ENCODE measurements at regions of chr9 and their contacts with region 1.

Region 1: GRCh38 chr9:33466565-33467495 is 6.9 kb downstream of the NOL6 start:
- DNase-seq: peak; percentile 85
- ATAC-seq: peak; percentile 88
- H3K4me3 Mint-ChIP-seq: no peak overlapping the region
- H3K27ac Mint-ChIP-seq: no peak overlapping the region
- H3K4me1 Mint-ChIP-seq: peaks cover 10% of the 10 kb centered on the region
- H3K27me3 Mint-ChIP-seq: no peaks in the 10 kb centered on the region

Region 2: DNA sequence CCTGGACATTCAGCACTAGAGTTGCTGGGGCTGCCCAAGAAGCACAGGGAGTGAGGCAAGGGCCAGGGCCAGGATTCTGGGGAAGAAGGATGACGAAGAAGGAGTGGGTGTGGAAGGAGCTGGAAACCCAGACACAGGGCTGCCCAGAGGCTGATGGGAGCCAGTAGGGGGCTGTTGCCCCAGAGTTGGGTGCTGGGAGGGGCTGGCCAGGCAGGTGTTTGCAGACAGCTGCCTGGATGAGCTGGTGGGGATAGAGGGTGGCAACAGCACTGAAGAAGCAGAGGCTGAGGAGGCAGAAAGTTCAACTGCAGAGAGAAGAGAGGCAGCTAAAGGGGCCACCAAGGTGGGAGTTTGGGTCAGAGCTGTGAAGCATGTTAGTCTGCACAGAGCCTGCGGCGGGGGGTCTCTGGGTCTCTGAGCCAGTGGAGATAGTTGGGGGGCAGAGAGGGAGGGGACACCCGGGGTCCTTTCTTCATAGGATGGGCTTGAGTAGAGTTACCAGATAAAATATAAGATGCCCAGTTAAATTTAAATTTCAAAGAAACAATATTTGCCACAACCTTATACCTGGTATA is 62.0 kb before region 1 on chr9:
- CTCF ChIA-PET with region 1: interaction called, 32 read pairs
- POLR2A ChIA-PET with region 1: interaction called, 4 read pairs
- intact Hi-C with region 1: loop called (anchors 1 kb)
- DNase-seq: no peak
- ATAC-seq: no peak
- H3K4me3 Mint-ChIP-seq: no peak overlapping the region
- H3K27ac Mint-ChIP-seq: no peak overlapping the region
- H3K4me1 Mint-ChIP-seq: peaks cover 3% of the 10 kb centered on the region
- H3K27me3 Mint-ChIP-seq: no peaks in the 10 kb centered on the region

Region 3: DNA sequence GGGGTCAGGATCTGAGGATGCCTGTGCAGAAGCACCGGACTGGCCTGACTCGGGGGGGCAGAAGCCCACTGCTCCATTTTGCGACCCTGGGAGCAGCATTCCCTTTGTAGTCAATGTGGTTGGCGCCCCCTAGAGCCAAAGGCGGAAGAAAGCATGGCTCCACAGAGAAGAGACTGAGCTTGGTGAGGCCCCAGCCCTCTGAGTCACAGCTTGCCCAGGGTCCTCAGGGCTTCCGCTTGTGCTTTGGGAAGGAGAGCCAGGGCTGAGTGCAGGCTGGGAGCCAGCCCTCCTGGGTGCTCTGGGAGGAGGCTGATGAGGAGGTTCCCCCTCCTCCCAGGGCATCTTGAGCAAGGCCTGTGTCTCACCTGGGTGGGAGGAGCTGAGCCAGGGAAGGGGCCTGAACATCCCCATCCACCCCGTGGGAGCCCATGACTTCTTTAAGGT is 14.0 kb before region 1 on chr9:
- CTCF ChIA-PET with region 1: interaction called, 45 read pairs
- POLR2A ChIA-PET with region 1: interaction called, 3 read pairs
- intact Hi-C with region 1: no loop called
- DNase-seq: peak; percentile 83
- ATAC-seq: peak; percentile 87
- H3K4me3 Mint-ChIP-seq: peak overlapping the region; percentile 15
- H3K27ac Mint-ChIP-seq: peak overlapping the region; percentile 85
- H3K4me1 Mint-ChIP-seq: peaks cover 63% of the 10 kb centered on the region
- H3K27me3 Mint-ChIP-seq: no peaks in the 10 kb centered on the region

Region 4: DNA sequence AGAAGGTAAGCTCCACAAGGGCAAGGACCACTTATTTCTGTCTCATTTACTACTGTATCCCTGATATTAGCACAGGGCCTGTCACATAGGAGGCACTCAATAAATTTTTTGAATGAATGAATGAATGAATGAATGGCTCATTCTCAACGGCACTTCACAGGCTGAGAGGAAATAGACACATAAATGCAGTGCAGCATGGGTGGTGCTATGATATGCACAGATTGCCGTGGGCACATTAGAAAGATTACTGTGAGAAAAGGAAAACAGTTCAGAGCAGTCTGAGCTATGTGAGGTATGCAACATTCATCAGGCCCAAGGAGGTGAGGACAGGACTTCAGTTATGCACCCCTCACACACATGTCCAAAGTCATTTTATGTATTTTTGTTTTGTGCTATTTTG is 13.3 kb after region 1 on chr9:
- CTCF ChIA-PET with region 1: interaction called, 12 read pairs
- POLR2A ChIA-PET with region 1: no interaction called
- intact Hi-C with region 1: no loop called
- DNase-seq: no peak
- ATAC-seq: no peak
- H3K4me3 Mint-ChIP-seq: no peak overlapping the region
- H3K27ac Mint-ChIP-seq: no peak overlapping the region
- H3K4me1 Mint-ChIP-seq: no peaks in the 10 kb centered on the region
- H3K27me3 Mint-ChIP-seq: no peaks in the 10 kb centered on the region

Region 5: GRCh38 chr9:33623658-33624586 is 157.1 kb after region 1 on chr9:
- CTCF ChIA-PET with region 1: no interaction called
- POLR2A ChIA-PET with region 1: no interaction called
- intact Hi-C with region 1: no loop called
- DNase-seq: peak; percentile 79
- ATAC-seq: peak; percentile 94
- H3K4me3 Mint-ChIP-seq: no peak overlapping the region
- H3K27ac Mint-ChIP-seq: no peak overlapping the region
- H3K4me1 Mint-ChIP-seq: peaks cover 6% of the 10 kb centered on the region
- H3K27me3 Mint-ChIP-seq: peaks cover 21% of the 10 kb centered on the region

Measured in activated CD4-positive, alpha-beta T cell treated with anti-CD3 and anti-CD28 coated beads for 36 hours (primary cell).